MCF 10A (cell line): ENCODE measurements at regions of chr17 and their contacts with region 1.

Region 1: GRCh38 chr17:41688699-41689496 is at the start of gene EIF1:
- DNase-seq: peak; percentile 100
- H3K4me3 Mint-ChIP-seq: peak within 1 kb of the TSS; percentile 94
- H3K27ac Mint-ChIP-seq: peak within 1 kb of the TSS; percentile 100
- H3K4me1 Mint-ChIP-seq: peaks cover 6% of the 10 kb centered on the region
- H3K27me3 Mint-ChIP-seq: no peaks in the 10 kb centered on the region
- CTCF ChIP-seq: no peak
- total RNA-seq, gene EIF1: 1,945 and 2,169 TPM in 2 replicates

Region 2: GRCh38 chr17:40818733-40819527 is 870.0 kb before region 1 on chr17:
- CTCF ChIA-PET with region 1: interaction called, 3 read pairs
- POLR2A ChIA-PET with region 1: interaction called, 39 read pairs
- intact Hi-C with region 1: no loop called
- DNase-seq: peak; percentile 69
- H3K4me3 Mint-ChIP-seq: peak overlapping the region; percentile 83
- H3K27ac Mint-ChIP-seq: peak overlapping the region; percentile 95
- H3K4me1 Mint-ChIP-seq: peaks cover 28% of the 10 kb centered on the region
- H3K27me3 Mint-ChIP-seq: no peaks in the 10 kb centered on the region
- CTCF ChIP-seq: no peak

Region 3: DNA sequence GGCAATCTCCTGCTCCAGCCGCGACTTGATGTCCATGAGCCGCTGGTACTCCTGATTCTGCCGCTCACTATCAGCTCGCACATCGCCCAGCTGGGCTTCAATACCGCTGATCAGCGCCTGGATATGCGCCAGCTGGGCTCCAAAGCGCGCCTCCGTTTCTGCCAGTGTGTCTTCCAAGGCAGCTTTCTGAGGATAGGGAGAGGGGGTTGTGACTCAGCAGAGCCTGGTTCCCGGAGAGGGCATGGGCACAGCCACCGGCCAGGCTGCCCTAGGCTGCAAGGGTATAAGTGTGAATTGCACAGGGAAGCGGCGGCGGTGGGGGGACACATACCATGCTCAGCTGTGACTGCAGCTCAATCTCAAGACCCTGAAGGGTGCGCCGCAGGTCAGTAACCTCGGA is 165.1 kb before region 1 on chr17:
- CTCF ChIA-PET with region 1: no interaction called
- POLR2A ChIA-PET with region 1: no interaction called
- intact Hi-C with region 1: no loop called
- DNase-seq: peak; percentile 72
- H3K4me3 Mint-ChIP-seq: peak overlapping the region; percentile 35
- H3K27ac Mint-ChIP-seq: no peak overlapping the region
- H3K4me1 Mint-ChIP-seq: peaks cover 38% of the 10 kb centered on the region
- H3K27me3 Mint-ChIP-seq: no peaks in the 10 kb centered on the region
- CTCF ChIP-seq: no peak

Region 4: GRCh38 chr17:41602524-41602923 is 86.4 kb before region 1 on chr17:
- CTCF ChIA-PET with region 1: no interaction called
- POLR2A ChIA-PET with region 1: no interaction called
- intact Hi-C with region 1: no loop called
- DNase-seq: no peak
- H3K4me3 Mint-ChIP-seq: no peak overlapping the region
- H3K27ac Mint-ChIP-seq: no peak overlapping the region
- H3K4me1 Mint-ChIP-seq: no peaks in the 10 kb centered on the region
- H3K27me3 Mint-ChIP-seq: no peaks in the 10 kb centered on the region
- CTCF ChIP-seq: no peak

Region 5: GRCh38 chr17:41615454-41615853 is 73.4 kb before region 1 on chr17:
- CTCF ChIA-PET with region 1: no interaction called
- POLR2A ChIA-PET with region 1: interaction called, 12 read pairs
- intact Hi-C with region 1: no loop called
- DNase-seq: peak; percentile 75
- H3K4me3 Mint-ChIP-seq: no peak overlapping the region
- H3K27ac Mint-ChIP-seq: peak overlapping the region; percentile 39
- H3K4me1 Mint-ChIP-seq: peaks cover 21% of the 10 kb centered on the region
- H3K27me3 Mint-ChIP-seq: no peaks in the 10 kb centered on the region
- CTCF ChIP-seq: no peak

Region 6: GRCh38 chr17:41655611-41656351 is 33.1 kb before region 1 on chr17:
- CTCF ChIA-PET with region 1: interaction called, 3 read pairs
- POLR2A ChIA-PET with region 1: interaction called, 136 read pairs
- intact Hi-C with region 1: no loop called
- DNase-seq: peak; percentile 98
- H3K4me3 Mint-ChIP-seq: peak overlapping the region; percentile 69
- H3K27ac Mint-ChIP-seq: no peak overlapping the region
- H3K4me1 Mint-ChIP-seq: peaks cover 68% of the 10 kb centered on the region
- H3K27me3 Mint-ChIP-seq: no peaks in the 10 kb centered on the region
- CTCF ChIP-seq: no peak

Region 7: GRCh38 chr17:41717408-41718286 is 28.7 kb after region 1 on chr17:
- CTCF ChIA-PET with region 1: interaction called, 6 read pairs
- POLR2A ChIA-PET with region 1: interaction called, 30 read pairs
- intact Hi-C with region 1: no loop called
- DNase-seq: peak; percentile 78
- H3K4me3 Mint-ChIP-seq: peak overlapping the region; percentile 51
- H3K27ac Mint-ChIP-seq: peak overlapping the region; percentile 66
- H3K4me1 Mint-ChIP-seq: peaks cover 10% of the 10 kb centered on the region
- H3K27me3 Mint-ChIP-seq: no peaks in the 10 kb centered on the region
- CTCF ChIP-seq: no peak

Region 8: GRCh38 chr17:41801374-41802271 is 112.7 kb after region 1 on chr17:
- CTCF ChIA-PET with region 1: interaction called, 3 read pairs
- POLR2A ChIA-PET with region 1: interaction called, 14 read pairs
- intact Hi-C with region 1: no loop called
- DNase-seq: peak; percentile 91
- H3K4me3 Mint-ChIP-seq: peak overlapping the region; percentile 56
- H3K27ac Mint-ChIP-seq: peak overlapping the region; percentile 89
- H3K4me1 Mint-ChIP-seq: peaks cover 22% of the 10 kb centered on the region
- H3K27me3 Mint-ChIP-seq: no peaks in the 10 kb centered on the region
- CTCF ChIP-seq: peak; percentile 95

Region 9: GRCh38 chr17:41966463-41967140 is 277.7 kb after region 1 on chr17 and contains the start of gene CNP:
- CTCF ChIA-PET with region 1: no interaction called
- POLR2A ChIA-PET with region 1: interaction called, 11 read pairs
- intact Hi-C with region 1: no loop called
- DNase-seq: peak; percentile 88
- H3K4me3 Mint-ChIP-seq: peak within 1 kb of the TSS; percentile 79
- H3K27ac Mint-ChIP-seq: peak within 1 kb of the TSS; percentile 77
- H3K4me1 Mint-ChIP-seq: peaks cover 25% of the 10 kb centered on the region
- H3K27me3 Mint-ChIP-seq: no peaks in the 10 kb centered on the region
- CTCF ChIP-seq: no peak
- total RNA-seq, gene CNP: 42.6 and 46.2 TPM in 2 replicates